ENCODE measurements at regions of chr17 and their contacts with region 1.

Region 1: GRCh38 chr17:50626037-50626574 is 8.6 kb upstream of the ABCC3 start:
- DNase-seq: peak; percentile 79
- H3K4me3 Mint-ChIP-seq: no peak overlapping the region
- H3K27ac Mint-ChIP-seq: no peak overlapping the region
- H3K4me1 Mint-ChIP-seq: peaks cover 6% of the 10 kb centered on the region
- H3K27me3 Mint-ChIP-seq: peaks cover 92% of the 10 kb centered on the region

Region 2: DNA sequence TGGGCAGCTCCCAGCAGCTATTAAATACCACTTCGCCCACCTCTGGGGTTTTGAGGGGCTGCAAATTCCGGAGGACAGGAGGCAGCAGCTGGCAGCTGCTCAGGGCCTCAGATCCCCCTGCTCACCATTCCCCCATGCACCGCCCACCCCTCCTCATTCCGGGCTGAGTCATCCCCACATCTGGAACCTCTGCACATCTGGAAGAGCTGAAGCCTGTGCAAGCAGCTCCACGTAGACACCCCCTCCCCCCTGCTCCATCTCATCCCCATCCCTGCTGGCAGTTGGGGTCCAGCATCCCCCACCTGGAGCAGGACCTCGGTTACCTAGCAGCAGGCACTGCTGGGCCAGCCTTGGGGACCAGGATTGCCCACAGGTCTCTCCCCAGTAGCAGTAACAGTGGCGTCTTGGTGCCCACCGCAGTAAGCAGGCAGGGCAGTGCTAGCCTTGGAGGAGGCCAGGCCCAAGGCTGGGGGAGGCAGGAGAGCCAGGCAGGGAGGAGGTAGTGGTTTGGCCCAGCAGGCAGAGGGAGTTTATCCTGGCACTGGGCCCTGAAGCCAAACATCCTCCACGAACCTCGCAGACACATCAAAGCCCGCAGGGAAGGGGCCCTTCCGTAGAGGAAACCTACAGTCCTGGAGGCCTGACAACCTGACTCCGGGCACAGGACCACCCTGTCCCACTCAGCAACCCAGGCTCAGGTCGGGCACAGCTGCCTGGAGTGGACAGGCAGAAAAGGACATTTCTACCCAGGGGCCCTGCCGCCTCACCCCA is 359.6 kb before region 1 on chr17:
- CTCF ChIA-PET with region 1: no interaction called
- DNase-seq: peak; percentile 14
- H3K4me3 Mint-ChIP-seq: no peak overlapping the region
- H3K27ac Mint-ChIP-seq: no peak overlapping the region
- H3K4me1 Mint-ChIP-seq: no peaks in the 10 kb centered on the region
- H3K27me3 Mint-ChIP-seq: peaks cover 63% of the 10 kb centered on the region

Region 3: DNA sequence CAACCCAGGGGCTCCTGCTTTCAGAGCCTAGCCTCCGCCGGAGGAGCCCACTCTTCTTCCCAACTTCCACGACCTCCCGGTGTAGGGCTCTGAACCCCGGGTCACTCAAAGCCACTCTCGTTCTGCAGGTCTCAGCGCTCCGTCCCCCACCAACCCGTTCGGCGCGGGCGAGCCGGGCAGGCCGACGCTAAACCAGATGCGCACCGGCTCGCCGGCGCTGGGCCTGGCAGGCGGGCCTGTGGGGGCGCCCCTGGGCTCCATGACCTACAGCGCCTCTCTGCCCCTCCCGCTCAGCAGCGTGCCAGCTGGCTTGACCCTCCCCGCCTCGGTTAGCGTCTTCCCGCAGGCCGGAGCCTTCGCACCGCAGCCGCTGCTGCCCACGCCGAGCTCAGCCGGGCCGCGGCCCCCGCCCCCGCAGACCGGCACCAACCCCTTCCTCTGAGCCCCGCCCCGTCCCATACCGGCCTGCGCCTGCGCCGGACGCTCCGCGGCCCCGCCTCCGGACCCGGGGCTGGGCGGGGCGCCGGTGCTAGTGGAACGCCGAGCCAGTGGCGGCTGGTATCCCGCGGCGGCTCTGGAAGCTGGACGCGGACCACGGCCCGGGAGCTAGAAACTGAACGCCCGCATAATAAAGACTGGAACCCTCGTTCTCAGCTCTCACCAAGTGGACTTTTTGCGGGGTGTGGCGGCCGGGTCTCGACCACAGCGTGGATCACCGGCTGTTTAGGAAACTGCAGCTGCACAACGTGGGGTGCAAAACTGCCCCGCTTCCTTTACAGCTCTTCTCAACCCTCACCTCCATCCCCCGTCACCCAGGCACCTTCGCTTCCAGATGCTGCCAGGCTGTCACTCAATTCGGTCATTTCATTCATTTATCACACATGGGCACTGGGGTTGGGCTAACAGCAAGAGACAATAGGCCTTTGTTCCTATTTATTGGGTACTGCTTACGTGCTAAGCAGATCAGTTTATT is 84.1 kb before region 1 on chr17:
- CTCF ChIA-PET with region 1: interaction called, 25 read pairs
- DNase-seq: peak; percentile 88
- H3K4me3 Mint-ChIP-seq: peak overlapping the region; percentile 77
- H3K27ac Mint-ChIP-seq: peak overlapping the region; percentile 62
- H3K4me1 Mint-ChIP-seq: peaks cover 25% of the 10 kb centered on the region
- H3K27me3 Mint-ChIP-seq: peaks cover 48% of the 10 kb centered on the region

Region 4: GRCh38 chr17:50615828-50616227 is 10.3 kb before region 1 on chr17:
- CTCF ChIA-PET with region 1: interaction called, 11 read pairs
- DNase-seq: no peak
- H3K4me3 Mint-ChIP-seq: no peak overlapping the region
- H3K27ac Mint-ChIP-seq: no peak overlapping the region
- H3K4me1 Mint-ChIP-seq: peaks cover 7% of the 10 kb centered on the region
- H3K27me3 Mint-ChIP-seq: peaks cover 66% of the 10 kb centered on the region

Region 5: DNA sequence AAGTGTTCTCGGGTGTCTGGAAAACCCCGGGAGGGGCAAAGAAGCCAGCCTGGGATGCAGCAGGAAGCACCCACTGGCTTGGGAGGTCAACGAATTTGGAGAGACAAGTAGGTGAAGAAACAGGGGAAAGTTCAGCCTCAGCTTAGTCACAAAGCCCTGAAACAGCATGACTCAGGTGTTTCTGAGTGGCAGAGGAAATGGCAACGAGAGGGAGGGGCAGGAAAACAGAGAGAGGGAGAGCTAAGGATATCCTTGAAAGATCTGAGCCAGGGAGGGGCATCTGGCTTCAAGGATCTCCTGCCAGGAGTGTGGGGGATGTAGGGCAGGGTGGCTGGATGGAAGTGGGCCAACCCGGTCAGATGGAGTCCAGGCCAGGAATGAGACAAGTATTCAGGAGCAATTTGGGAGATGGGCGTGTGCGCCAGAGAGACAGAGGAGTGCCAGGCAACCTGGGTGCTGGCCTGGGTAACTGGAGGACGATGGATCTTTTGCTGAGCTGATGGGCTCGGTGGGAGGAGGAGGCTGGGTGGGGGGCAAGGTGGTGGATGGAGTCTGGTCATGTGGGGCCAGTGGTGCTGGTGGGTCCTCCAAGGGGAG is 35.8 kb after region 1 on chr17:
- CTCF ChIA-PET with region 1: interaction called, 12 read pairs
- DNase-seq: peak; percentile 56
- H3K4me3 Mint-ChIP-seq: no peak overlapping the region
- H3K27ac Mint-ChIP-seq: peak overlapping the region; percentile 83
- H3K4me1 Mint-ChIP-seq: peaks cover 22% of the 10 kb centered on the region
- H3K27me3 Mint-ChIP-seq: peaks cover 42% of the 10 kb centered on the region

Region 6: DNA sequence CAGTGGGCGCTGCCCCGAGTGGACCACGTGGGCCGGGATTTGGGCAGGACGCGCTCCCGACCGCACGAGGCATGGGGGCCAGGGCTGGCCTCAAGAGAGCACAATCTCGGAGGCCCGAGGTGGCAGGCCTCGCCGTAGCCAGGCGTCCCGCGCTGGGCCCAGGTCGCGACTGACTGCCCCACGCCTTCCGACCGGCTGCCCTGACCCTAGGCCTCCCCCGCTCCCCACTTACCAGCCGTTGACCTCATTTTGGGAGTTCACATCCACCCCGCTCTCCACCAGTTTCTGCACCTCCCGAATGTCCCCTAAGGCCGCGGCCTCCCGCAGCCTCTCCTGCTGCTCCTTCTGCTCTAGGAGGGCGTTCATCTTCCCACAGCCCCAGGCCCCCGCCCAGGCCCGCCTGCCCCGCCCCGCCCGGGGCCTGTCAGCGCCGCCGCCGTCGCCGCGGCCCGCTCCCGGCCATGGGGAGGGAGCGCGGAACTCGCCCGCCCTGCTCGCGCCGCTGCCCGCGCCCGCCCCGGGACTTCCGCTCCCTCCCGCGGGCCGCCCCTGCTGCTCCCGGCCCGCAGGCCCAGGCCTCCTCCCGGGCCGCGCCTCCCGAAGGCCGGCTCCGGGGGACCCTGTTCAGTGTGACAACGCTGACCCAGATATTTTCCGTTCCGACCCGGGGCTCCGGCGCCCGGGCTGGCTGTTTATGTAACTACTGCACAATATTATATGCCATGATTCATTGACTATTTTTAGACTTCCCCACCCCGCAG is 81.4 kb after region 1 on chr17 and contains the start of gene ANKRD40:
- CTCF ChIA-PET with region 1: interaction called, 11 read pairs
- DNase-seq: peak; percentile 91
- H3K4me3 Mint-ChIP-seq: peak within 1 kb of the TSS; percentile 85
- H3K27ac Mint-ChIP-seq: peak within 1 kb of the TSS; percentile 98
- H3K4me1 Mint-ChIP-seq: peaks cover 55% of the 10 kb centered on the region
- H3K27me3 Mint-ChIP-seq: peaks cover 10% of the 10 kb centered on the region

Measured in activated naive CD4-positive, alpha-beta T cell treated with anti-CD3 and anti-CD28 coated beads, Interleukin-2, amount 10 ng/mL, durations not matched to agents 7 days and 5 days (primary cell).